ENCODE measurements at regions of chr15 and their contacts with region 1.

Region 1: DNA sequence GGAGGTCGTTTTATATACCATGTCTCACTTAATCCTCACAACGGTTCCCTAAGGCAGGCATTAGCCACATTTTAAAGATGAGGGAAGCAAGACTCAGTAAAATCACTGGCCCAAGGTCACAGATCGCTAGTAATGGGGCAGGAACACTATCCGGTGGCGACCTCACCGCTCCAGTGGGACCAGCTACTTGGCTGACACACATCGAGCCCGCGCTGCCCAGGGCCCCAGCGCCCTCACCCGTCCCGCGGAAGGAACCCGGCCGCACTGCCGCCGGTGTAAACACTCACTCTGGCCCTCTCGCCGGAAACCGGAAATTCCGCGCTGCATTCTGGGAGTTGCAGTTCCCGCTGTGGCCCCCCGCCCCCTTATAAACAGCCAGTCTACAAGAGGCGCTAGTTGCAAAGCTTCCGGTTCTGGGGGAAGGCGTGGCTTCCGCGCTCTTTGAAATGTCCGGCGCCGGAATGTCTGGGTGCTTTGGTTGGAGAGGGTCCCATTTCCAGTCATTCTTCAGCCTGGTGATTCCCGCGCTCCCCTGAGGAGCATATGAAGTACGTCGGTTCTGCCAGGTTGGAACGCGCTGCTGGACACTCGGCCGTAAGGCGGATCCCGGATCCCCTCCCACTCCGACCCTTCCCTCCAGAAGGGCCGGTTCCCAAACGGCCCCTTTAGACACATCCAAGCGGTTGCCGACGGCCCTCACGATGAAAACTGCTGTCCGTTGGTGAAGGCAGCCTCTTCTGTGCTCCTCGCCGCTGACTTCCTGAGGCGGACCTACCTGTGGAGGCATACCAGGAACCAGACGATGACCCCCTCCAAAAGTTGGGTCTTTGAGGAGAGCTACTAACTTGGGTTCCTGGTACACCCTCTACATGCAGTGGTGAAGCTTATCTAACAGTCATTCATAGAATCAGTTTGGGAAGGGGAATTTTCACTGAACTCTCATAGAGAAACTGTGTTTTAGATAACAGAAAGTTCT is at the start of gene UBL7:
- DNase-seq: peak; percentile 96 to 98 (median 97)
- ATAC-seq: peak; percentile 99
- H3K4me3 ChIP-seq: peak within 1 kb of the TSS; percentile 52 to 84
- H3K27ac ChIP-seq: peak within 1 kb of the TSS; percentile 40 to 72 (median 61)
- H3K4me1 ChIP-seq: peaks cover 21% of the 10 kb centered on the region
- H3K27me3 ChIP-seq: no peaks in the 10 kb centered on the region
- CTCF ChIP-seq: peak in 3 of 7 experiments; percentile 15 to 29 (median 17)
- POLR2A ChIP-seq: peak; percentile 73 to 94 (median 93)
- total RNA-seq, gene UBL7: 25.7 to 47.2 TPM

Region 2: DNA sequence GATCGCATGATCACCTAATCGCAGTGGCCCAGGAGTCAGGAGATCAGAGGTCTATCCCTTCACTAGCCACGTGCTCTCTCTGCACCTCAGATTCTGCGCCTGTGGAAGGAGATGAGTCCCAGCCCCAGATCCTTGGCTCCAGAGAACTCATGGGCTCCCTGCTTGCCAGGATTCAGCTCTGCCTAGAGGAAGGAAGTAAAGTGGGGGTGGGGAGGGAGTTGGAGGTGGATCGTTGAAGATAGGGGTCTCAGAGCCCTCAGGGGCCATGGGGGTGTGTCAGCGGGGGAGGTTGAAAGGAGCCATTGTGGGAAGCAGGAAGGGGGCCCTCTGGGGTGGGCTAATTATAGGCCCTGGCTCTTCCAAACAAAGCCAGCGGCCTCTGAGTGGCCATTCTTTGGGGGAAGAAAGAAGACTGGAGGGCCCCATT is 247.3 kb before region 1 on chr15:
- intact Hi-C with region 1: no loop called
- DNase-seq: no peak
- ATAC-seq: no peak
- H3K4me3 ChIP-seq: no peak overlapping the region
- H3K27ac ChIP-seq: no peak overlapping the region
- H3K4me1 ChIP-seq: peaks cover 13% of the 10 kb centered on the region
- H3K27me3 ChIP-seq: no peaks in the 10 kb centered on the region
- CTCF ChIP-seq: no peak
- POLR2A ChIP-seq: no peak

Region 3: DNA sequence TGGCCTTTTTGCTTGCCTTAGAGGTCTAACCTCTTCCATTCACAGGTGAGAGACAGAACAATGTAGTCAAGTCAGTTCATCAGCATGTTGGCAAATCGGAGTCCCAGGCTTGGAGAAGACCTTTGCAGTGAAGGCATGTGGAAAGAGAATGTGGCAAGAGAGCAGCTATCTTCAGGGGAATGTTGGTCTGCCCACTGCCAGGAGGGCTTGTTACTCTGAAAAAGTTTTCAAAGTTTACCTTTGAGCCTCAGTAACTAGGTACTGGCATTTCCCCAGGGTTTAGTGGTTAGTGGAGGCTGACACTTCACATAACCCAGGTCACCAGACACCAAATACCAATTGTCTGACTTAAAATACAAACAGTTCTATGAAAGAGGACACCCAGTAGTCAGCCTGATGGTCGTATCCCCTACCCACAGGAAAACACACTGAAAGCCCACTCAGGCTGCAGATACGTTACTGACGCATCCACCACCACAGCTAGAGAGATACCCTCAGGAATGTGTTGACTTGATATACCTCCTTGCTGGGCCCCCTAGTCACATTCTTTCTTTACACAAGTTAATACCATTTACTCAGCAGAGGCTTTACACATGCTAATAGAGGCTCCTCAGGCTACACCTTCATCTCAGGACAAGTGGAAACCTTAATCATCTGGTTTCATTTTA is 70.1 kb after region 1 on chr15:
- intact Hi-C with region 1: loop called (anchors 10 kb)
- DNase-seq: no peak
- ATAC-seq: no peak
- H3K4me3 ChIP-seq: no peak overlapping the region
- H3K27ac ChIP-seq: no peak overlapping the region
- H3K4me1 ChIP-seq: no peaks in the 10 kb centered on the region
- H3K27me3 ChIP-seq: no peaks in the 10 kb centered on the region
- CTCF ChIP-seq: no peak
- POLR2A ChIP-seq: no peak

Measured in body of pancreas (tissue), 4 donors.